ENCODE measurements at regions of chr13 and their contacts with region 1.

Region 1: GRCh38 chr13:98429977-98430736 is 146.8 kb downstream of the STK24 start:
- DNase-seq: no peak
- ATAC-seq: peak in 3 of 4 donors; percentile 1 to 21 (median 7)
- H3K4me3 ChIP-seq: peak overlapping the region in 1 of 4 donors; percentile 28
- H3K27ac ChIP-seq: no peak overlapping the region
- H3K4me1 ChIP-seq: peaks cover 0 to 9% (median 8%) of the 10 kb centered on the region in 3 donors
- H3K27me3 ChIP-seq: no peaks in the 10 kb centered on the region
- CTCF ChIP-seq: no peak

Region 2: GRCh38 chr13:97855570-97856303 is 574.4 kb before region 1 on chr13:
- intact Hi-C with region 1: loop called in 1 of 3 experiments (anchors 10 kb)
- DNase-seq: peak in 4 of 6 donors; percentile 16 to 47 (median 28)
- ATAC-seq: peak; percentile 85 to 97 (median 96)
- H3K4me3 ChIP-seq: no peak overlapping the region
- H3K27ac ChIP-seq: no peak overlapping the region
- H3K4me1 ChIP-seq: no peaks in the 10 kb centered on the region
- H3K27me3 ChIP-seq: no peaks in the 10 kb centered on the region
- CTCF ChIP-seq: peak; percentile 60 to 81 (median 70)

Region 3: DNA sequence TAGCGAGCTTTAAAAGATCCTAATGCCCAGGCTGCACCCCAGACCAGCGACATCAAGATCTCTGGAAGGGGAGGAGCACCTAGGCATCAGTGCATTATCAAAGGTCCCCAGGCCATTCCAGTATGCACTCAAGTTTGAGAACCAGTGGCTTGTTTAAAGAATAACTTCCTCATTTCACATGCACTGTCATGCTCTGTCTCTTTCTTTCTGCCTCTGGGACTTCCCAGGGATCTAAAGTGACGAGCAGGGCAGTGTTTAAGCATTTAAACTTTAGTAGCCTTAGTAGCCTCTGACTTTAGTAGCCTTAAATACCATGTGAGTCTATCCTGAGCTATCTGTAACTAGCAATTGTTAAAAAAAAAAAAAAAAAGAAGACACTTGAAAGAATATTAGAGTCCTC is 296.2 kb before region 1 on chr13:
- intact Hi-C with region 1: loop called in 1 of 3 experiments (anchors 10 kb)
- DNase-seq: no peak
- ATAC-seq: peak in 2 of 4 donors; percentile 51 to 56
- H3K4me3 ChIP-seq: no peak overlapping the region
- H3K27ac ChIP-seq: no peak overlapping the region
- H3K4me1 ChIP-seq: no peaks in the 10 kb centered on the region
- H3K27me3 ChIP-seq: no peaks in the 10 kb centered on the region
- CTCF ChIP-seq: no peak

Region 4: DNA sequence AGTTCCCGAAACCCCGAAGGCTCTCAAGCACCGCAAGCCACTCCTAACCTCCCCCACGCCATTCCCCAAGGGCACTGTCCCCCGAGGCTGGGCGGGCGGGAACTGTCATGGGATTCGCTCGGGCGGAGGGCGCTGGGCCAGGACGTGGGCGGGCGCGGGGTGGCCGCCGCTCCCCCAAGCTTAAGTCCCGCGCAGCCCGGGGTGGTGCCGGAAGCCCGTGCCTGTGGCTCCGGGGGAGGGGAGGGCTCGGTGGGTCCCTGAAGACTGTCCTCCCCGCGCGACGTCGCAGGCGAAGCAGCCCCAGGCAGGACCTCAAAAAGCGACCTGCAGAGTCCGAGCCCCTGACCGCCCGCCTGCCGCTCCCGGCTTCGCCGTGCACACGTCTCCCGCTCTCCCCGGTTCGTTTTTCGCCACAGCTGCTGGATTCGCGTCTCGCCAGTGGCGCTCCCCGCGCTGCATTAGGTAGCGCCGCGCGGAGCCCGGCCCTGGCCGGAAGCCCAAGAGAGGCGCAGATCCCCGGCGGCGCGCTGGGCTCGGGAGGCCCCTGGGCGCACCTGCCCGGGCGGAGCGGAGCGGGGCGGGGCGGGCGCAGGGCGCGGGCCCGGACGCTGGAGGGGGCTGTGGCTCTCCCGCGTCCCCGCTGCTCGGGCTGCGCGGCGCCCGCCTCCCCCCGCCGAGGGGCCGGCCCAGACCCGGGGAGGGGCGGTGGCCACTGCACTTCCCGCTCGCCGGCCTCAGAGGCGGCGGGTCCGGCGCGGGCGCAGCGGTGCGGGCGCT is 287.6 kb before region 1 on chr13 and contains the start of gene FARP1:
- intact Hi-C with region 1: loop called in 2 of 3 experiments (anchors 10 kb)
- DNase-seq: peak; percentile 81 to 95 (median 90)
- ATAC-seq: peak; percentile 90 to 95 (median 90)
- H3K4me3 ChIP-seq: peak within 1 kb of the TSS; percentile 63 to 79 (median 70)
- H3K27ac ChIP-seq: peak within 1 kb of the TSS; percentile 72 to 87 (median 83)
- H3K4me1 ChIP-seq: peaks cover 18 to 23% (median 22%) of the 10 kb centered on the region in 3 donors
- H3K27me3 ChIP-seq: no peaks in the 10 kb centered on the region
- CTCF ChIP-seq: peak in 2 of 4 donors; percentile 9 to 25
- total RNA-seq, gene FARP1: 49.9 to 95.1 (median 63.8) TPM

Measured in pancreas (tissue), 10 donors.